ENCODE measurements at regions of chr17 and their contacts with region 1.

Region 1: GRCh38 chr17:81436294-81436849 is 41.1 kb downstream of the BAHCC1 start:
- DNase-seq: peak; percentile 69 to 76
- ATAC-seq: peak; percentile 41 to 84 (median 75)
- H3K4me3 ChIP-seq: no peak overlapping the region
- H3K27ac ChIP-seq: peak overlapping the region; percentile 60 to 91 (median 82)
- H3K4me1 ChIP-seq: peaks cover 5 to 56% (median 37%) of the 10 kb centered on the region in 9 donors
- H3K27me3 ChIP-seq: no peaks in the 10 kb centered on the region
- CTCF ChIP-seq: peak in 1 of 9 donors; percentile 18

Region 2: DNA sequence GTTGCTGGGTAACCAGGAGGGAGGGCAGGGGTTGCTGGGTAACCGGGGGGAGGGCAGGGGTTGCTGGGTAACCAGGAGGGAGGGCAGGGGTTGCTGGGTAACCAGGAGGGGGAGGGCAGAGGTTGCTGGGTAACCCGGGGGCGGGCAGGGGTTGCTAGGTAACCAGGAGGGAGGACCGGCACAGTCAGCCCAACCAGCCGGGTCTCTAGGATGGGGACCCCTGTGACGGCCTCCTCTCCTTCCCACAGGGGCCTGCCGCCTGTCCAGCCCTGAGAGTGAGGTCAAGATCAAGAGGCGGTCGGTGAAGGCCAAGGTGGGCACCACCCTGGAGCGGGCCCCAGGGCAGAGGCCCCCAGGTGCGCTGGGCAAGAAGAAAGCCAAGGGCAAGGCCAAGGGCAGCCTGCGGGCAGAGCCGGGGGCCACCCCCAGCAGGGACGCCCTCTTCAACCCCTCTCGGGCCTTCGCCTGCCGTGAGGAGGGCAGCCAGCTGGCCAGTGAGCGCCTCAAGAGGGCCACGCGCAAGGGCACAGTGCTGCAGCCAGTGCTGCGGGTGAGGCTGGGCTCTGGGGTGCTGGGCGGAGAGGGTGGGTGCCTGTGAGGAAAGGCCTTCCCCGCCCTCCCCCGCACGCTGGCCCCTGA is 21.7 kb after region 1 on chr17:
- intact Hi-C with region 1: loop called in 1 of 10 experiments (anchors 2 kb)
- DNase-seq: no peak
- ATAC-seq: peak in 1 of 8 donors; percentile 20
- H3K4me3 ChIP-seq: no peak overlapping the region
- H3K27ac ChIP-seq: peak overlapping the region in 1 of 10 donors; percentile 65
- H3K4me1 ChIP-seq: peaks cover 0 to 24% (median 9%) of the 10 kb centered on the region in 9 donors
- H3K27me3 ChIP-seq: no peaks in the 10 kb centered on the region
- CTCF ChIP-seq: no peak

Measured in heart right ventricle (tissue), 16 donors.